CD8-positive, alpha-beta memory T cell (primary cell): ENCODE measurements at regions of chr3 and their contacts with region 1.

Region 1: DNA sequence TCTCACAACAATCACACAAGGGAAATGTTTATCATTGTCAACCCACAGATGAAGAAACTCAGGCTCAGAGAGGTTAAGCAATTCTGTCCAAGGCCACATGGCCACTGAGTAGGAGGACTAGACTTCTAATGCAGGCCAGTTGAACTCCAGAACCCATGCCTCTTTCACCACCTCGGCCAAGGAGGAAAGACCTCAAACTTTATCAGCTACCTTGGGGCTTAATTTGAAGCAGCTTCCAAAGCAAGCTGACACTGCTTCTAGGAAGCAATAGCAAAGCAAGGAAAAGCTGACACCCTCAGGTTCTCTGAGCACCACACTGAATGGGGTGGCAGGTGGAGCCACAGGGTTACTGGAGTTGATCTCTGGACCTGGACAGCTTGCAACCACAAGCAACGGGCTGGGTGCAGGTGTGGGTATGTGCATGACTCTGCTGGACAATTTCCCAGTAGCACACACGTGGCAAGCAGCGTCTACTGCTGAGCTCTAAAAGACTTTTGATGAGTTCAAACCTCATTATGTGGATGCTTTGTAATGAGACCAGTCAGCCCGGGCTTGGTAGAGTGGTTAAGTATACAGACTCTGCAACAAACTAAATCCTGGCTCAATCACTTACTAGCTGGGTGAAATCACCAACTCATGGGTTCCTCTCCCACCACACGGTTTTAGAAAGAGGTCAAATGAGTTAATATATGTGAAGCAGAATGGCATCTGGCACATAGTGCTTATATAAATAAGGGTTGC is 23.1 kb downstream of the CCNL1 start:
- DNase-seq: no peak
- H3K4me3 ChIP-seq: no peak overlapping the region
- H3K4me3 Mint-ChIP-seq: peak overlapping the region in 1 of 7 donors; percentile 55
- H3K27ac ChIP-seq: no peak overlapping the region
- H3K27ac Mint-ChIP-seq: peak overlapping the region in 5 of 8 donors; percentile 1 to 85 (median 74)
- H3K4me1 ChIP-seq: peaks cover 28% of the 10 kb centered on the region
- H3K4me1 Mint-ChIP-seq: peaks cover 38 to 55% (median 54%) of the 10 kb centered on the region in 3 donors
- H3K27me3 ChIP-seq: no peaks in the 10 kb centered on the region
- H3K27me3 Mint-ChIP-seq: no peaks in the 10 kb centered on the region

Region 2: GRCh38 chr3:156554842-156555687 is 581.8 kb before region 1 on chr3 and contains the start of gene SSR3:
- CTCF ChIA-PET with region 1: interaction called, 13 read pairs
- POLR2A ChIA-PET with region 1: no interaction called
- DNase-seq: peak; percentile 98 to 99 (median 99)
- H3K4me3 ChIP-seq: peak within 1 kb of the TSS; percentile 92
- H3K4me3 Mint-ChIP-seq: peak within 1 kb of the TSS; percentile 96 to 99 (median 97)
- H3K27ac ChIP-seq: peak within 1 kb of the TSS; percentile 91
- H3K27ac Mint-ChIP-seq: peak within 1 kb of the TSS; percentile 85 to 98 (median 96)
- H3K4me1 ChIP-seq: peaks cover 29% of the 10 kb centered on the region
- H3K4me1 Mint-ChIP-seq: peaks cover 46 to 56% (median 55%) of the 10 kb centered on the region in 3 donors
- H3K27me3 ChIP-seq: no peaks in the 10 kb centered on the region
- H3K27me3 Mint-ChIP-seq: no peaks in the 10 kb centered on the region
- total RNA-seq, gene SSR3: 171 to 175 TPM

Region 3: GRCh38 chr3:157081681-157082210 is 55.1 kb before region 1 on chr3:
- CTCF ChIA-PET with region 1: interaction called, 46 read pairs
- POLR2A ChIA-PET with region 1: no interaction called
- DNase-seq: peak; percentile 76 to 92 (median 81)
- H3K4me3 ChIP-seq: no peak overlapping the region
- H3K4me3 Mint-ChIP-seq: peak overlapping the region in 4 of 7 donors; percentile 19 to 70 (median 33)
- H3K27ac ChIP-seq: peak overlapping the region; percentile 25
- H3K27ac Mint-ChIP-seq: peak overlapping the region; percentile 86 to 94 (median 89)
- H3K4me1 ChIP-seq: peaks cover 11% of the 10 kb centered on the region
- H3K4me1 Mint-ChIP-seq: peaks cover 21 to 36% (median 33%) of the 10 kb centered on the region in 3 donors
- H3K27me3 ChIP-seq: no peaks in the 10 kb centered on the region
- H3K27me3 Mint-ChIP-seq: no peaks in the 10 kb centered on the region

Region 4: GRCh38 chr3:157119369-157119951 is 17.4 kb before region 1 on chr3:
- CTCF ChIA-PET with region 1: interaction called, 11 read pairs
- POLR2A ChIA-PET with region 1: no interaction called
- DNase-seq: peak in 1 of 5 donors; percentile 35
- H3K4me3 ChIP-seq: no peak overlapping the region
- H3K4me3 Mint-ChIP-seq: peak overlapping the region in 5 of 7 donors; percentile 40 to 66 (median 59)
- H3K27ac ChIP-seq: no peak overlapping the region
- H3K27ac Mint-ChIP-seq: peak overlapping the region in 7 of 8 donors; percentile 61 to 91 (median 83)
- H3K4me1 ChIP-seq: peaks cover 4% of the 10 kb centered on the region
- H3K4me1 Mint-ChIP-seq: peaks cover 9 to 10% (median 10%) of the 10 kb centered on the region in 3 donors
- H3K27me3 ChIP-seq: no peaks in the 10 kb centered on the region
- H3K27me3 Mint-ChIP-seq: no peaks in the 10 kb centered on the region

Region 5: DNA sequence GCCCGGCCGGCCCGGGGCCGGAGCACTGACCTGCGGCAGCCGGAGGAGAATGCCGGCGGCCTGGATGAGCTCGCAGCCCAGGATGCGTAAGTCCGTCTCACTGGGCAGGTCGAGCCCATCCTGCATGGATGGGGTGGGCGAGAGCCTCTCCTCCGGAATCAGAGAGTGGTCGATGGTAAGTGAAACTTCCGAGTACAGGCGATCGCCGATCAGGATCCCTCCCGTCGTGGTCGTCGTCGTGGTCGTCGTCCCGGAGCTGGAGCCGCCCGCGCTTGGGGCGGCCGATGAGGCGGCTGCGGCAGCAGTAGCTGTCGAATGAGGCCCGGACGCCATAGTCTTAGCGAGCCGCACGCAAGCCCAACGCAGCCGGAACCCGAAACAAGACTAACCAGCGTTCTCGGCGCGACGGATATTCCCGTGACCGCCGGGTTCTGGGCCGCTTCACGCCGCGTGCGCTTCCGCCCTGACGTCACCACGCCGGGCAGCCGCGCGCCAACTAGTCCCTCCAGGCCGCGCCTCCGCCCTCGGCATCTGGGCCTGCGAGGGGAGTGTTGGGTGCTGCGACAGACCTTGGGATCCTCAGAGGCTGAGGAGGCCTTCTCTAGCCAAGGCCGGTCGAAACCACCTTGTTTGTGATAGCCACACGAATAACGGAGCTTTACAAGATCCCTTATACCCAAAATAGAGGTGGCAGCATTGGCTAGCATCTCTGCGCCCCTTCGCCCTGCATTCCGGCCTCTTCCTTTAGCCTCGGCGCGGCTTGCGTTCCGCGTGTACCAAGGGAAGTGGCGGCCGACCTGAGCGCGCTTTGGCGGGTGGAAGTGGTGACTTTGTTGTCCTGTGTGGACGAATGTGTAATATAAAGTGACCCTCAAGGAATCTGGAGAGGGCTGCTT is 23.2 kb after region 1 on chr3 and contains the start of gene CCNL1:
- CTCF ChIA-PET with region 1: interaction called, 15 read pairs
- POLR2A ChIA-PET with region 1: interaction called, 15 read pairs
- DNase-seq: peak; percentile 92 to 97 (median 96)
- H3K4me3 ChIP-seq: peak within 1 kb of the TSS; percentile 96
- H3K4me3 Mint-ChIP-seq: peak within 1 kb of the TSS; percentile 90 to 99 (median 93)
- H3K27ac ChIP-seq: peak within 1 kb of the TSS; percentile 100
- H3K27ac Mint-ChIP-seq: peak within 1 kb of the TSS; percentile 96 to 100 (median 100)
- H3K4me1 ChIP-seq: peaks cover 46% of the 10 kb centered on the region
- H3K4me1 Mint-ChIP-seq: peaks cover 53 to 63% (median 54%) of the 10 kb centered on the region in 3 donors
- H3K27me3 ChIP-seq: no peaks in the 10 kb centered on the region
- H3K27me3 Mint-ChIP-seq: peaks cover 0 to 5% of the 10 kb centered on the region in 2 donors
- total RNA-seq, gene CCNL1: 125 to 126 TPM